Activated T-helper 1 cell treated with anti-CD3 and anti-CD28 coated beads, Interleukin-12 subunit alpha, Interleukin-12 subunit beta, Interleukin-2, Interleukin-4 antibody, amounts not matched to agents 30 ng/mL and 10 ng/mL and 1 ng/mL, durations not matched to agents 14 hours and 24 hours and 36 hours (primary cell): ENCODE measurements at regions of chr10 and their contacts with region 1.

Region 1: GRCh38 chr10:128064108-128064969 is 61.9 kb downstream of the MKI67 start:
- DNase-seq: peak; percentile 59
- H3K4me3 Mint-ChIP-seq: peak overlapping the region; percentile 78
- H3K27ac Mint-ChIP-seq: peak overlapping the region; percentile 93
- H3K4me1 Mint-ChIP-seq: peaks cover 63% of the 10 kb centered on the region
- H3K27me3 Mint-ChIP-seq: no peaks in the 10 kb centered on the region

Region 2: DNA sequence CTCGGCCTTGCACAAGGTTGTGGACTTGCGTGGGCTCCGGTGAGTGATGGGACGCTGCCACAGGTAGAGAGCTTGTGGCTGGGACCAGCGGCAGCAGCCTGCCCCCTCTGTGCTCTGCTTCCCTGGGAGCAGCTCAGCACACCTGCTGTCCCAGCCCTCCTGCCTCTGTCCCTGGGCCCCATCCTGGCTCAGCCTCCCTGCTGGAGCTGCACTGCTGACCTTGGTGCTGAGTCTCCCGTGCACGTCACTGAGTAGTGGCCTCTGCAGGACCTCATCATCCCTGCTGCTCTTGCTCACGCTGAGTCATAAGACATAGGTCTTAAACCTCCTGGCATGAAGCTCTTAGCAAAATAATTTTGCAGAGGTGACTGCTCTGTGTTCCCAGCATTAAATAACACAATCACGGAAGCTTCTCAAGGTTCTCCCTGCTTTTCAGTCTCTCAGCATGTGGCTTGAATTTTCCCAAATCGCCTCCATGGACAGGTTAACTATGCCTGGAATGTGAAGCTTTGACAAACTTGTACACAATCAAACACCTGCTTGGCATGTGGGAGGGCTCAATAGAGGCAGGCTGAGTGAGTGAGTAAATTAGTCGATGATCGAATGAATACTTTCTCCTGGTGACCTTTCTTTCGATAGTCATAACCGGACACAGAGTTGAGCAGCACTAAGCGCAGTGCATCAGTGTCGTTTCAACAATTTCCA is 579.0 kb before region 1 on chr10:
- intact Hi-C with region 1: no loop called
- DNase-seq: no peak
- H3K4me3 Mint-ChIP-seq: no peak overlapping the region
- H3K27ac Mint-ChIP-seq: no peak overlapping the region
- H3K4me1 Mint-ChIP-seq: no peaks in the 10 kb centered on the region
- H3K27me3 Mint-ChIP-seq: no peaks in the 10 kb centered on the region

Region 3: GRCh38 chr10:127906548-127907377 is 157.6 kb before region 1 on chr10 and contains the start of gene PTPRE:
- intact Hi-C with region 1: loop called (anchors 1 kb)
- DNase-seq: peak; percentile 66
- H3K4me3 Mint-ChIP-seq: peak within 1 kb of the TSS; percentile 66
- H3K27ac Mint-ChIP-seq: no peak within 1 kb of the TSS
- H3K4me1 Mint-ChIP-seq: no peaks in the 10 kb centered on the region
- H3K27me3 Mint-ChIP-seq: peaks cover 26% of the 10 kb centered on the region
- total RNA-seq, gene PTPRE: 40.8 and 41.8 TPM in 2 replicates

Region 4: DNA sequence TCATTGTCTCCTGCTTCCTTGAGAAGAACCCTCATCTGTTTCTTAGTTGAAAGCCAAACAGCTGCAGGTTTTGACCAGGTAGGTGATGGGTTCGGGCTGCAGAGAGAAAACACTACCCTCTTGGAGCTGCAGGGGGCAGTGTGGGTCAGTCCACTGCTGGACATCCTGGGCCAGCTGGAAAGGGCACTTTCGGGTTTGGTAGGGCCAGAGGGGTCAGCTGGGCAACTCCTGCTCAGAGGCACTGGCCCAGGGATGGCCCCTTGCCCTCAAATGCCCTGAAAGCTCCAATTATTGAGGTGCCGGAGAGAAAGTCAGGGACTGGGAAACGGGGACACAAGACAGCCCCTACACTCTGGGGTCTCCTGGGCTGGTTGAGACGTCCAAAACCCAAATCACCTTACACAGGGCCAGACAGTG is 28.8 kb before region 1 on chr10:
- intact Hi-C with region 1: loop called (anchors 1 kb)
- DNase-seq: peak; percentile 42
- H3K4me3 Mint-ChIP-seq: no peak overlapping the region
- H3K27ac Mint-ChIP-seq: no peak overlapping the region
- H3K4me1 Mint-ChIP-seq: no peaks in the 10 kb centered on the region
- H3K27me3 Mint-ChIP-seq: no peaks in the 10 kb centered on the region

Region 5: DNA sequence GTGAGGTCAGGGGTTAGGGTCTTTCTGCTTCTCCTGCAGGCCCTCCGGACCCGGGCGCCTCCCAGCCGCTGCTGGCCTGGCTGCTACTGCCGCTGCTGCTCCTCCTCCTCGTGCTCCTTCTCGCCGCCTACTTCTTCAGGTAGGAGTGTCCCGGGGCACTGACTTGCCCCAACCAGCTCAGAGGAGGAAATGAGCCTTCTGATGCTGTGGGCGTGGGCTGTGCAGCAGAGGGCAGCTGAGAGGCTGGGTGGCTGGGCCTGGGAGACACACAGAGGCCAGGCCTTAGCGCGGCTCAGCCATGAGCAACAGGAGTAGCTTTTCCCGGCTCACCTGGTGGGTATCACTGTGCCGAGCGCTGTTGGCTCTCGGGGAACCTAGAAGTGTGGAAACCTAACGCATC is 17.0 kb before region 1 on chr10:
- intact Hi-C with region 1: loop called (anchors 1 kb)
- DNase-seq: peak; percentile 83
- H3K4me3 Mint-ChIP-seq: peak overlapping the region; percentile 94
- H3K27ac Mint-ChIP-seq: peak overlapping the region; percentile 96
- H3K4me1 Mint-ChIP-seq: peaks cover 49% of the 10 kb centered on the region
- H3K27me3 Mint-ChIP-seq: peaks cover 2% of the 10 kb centered on the region

Region 6: GRCh38 chr10:128125944-128126764 is 61.8 kb after region 1 on chr10 and contains the start of gene MKI67:
- intact Hi-C with region 1: loop called (anchors 1 kb)
- DNase-seq: peak; percentile 88
- H3K4me3 Mint-ChIP-seq: peak within 1 kb of the TSS; percentile 98
- H3K27ac Mint-ChIP-seq: peak within 1 kb of the TSS; percentile 95
- H3K4me1 Mint-ChIP-seq: peaks cover 54% of the 10 kb centered on the region
- H3K27me3 Mint-ChIP-seq: peaks cover 2% of the 10 kb centered on the region
- total RNA-seq, gene MKI67: 141 and 159 TPM in 2 replicates

Region 7: DNA sequence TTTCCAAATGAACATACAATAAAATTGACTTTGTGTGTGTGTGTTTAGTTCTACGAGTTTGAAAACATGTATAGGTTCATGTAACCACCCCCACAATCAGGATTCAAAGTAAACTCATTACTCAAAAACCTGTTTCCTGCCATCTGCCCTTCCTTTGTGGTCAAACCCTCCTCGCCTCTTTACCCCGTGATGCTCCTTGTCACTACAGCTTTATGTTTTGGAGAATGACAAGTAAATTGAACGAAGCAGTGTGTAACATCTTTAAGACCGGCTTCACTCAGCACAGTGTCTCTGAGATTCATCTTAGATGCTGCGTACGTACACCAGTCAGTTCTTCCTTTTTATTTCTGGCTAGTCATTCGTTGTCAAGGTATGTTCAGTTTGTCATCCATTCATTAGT is 116.5 kb after region 1 on chr10:
- intact Hi-C with region 1: loop called (anchors 1 kb)
- DNase-seq: peak; percentile 68
- H3K4me3 Mint-ChIP-seq: peak overlapping the region; percentile 68
- H3K27ac Mint-ChIP-seq: peak overlapping the region; percentile 82
- H3K4me1 Mint-ChIP-seq: peaks cover 62% of the 10 kb centered on the region
- H3K27me3 Mint-ChIP-seq: no peaks in the 10 kb centered on the region

Region 8: DNA sequence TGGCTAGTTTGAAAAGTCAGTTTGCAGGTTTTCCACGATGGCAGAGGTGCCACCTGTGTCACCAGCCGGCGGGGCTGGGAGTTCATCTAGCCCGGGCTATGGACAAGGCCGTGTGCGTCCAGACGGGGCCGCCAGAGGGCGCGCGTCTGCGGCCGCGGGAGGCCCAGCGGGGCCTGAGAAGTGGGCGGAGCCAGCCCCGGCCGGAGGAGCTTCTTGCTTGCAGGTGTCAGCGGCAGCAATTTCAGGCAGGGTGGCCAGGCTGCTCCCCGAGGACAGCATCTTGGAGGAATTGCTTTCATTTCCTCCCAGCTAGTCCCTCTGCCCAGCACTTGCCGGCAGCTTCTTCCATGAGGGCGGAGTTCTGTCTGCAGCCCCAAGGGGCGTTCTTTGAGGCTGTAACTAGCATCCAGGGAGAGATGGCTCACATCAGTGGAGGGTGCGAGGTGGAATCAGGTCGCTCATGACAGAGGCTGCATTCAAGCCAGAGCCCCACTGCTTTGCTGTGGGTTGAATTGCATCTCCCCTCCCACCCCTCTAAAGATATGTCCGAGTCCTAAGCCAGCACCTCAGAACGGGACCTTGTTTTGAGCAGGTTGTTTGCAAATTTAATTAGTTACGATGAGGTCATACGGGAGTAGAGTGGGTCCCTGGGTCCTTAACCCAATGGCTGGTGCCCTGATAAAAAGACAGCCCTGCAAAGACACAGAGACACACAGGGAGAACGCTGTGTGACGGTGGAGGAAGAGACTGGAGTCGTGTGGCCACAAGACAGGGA is 147.8 kb after region 1 on chr10:
- intact Hi-C with region 1: loop called (anchors 1 kb)
- DNase-seq: peak; percentile 83
- H3K4me3 Mint-ChIP-seq: peak overlapping the region; percentile 86
- H3K27ac Mint-ChIP-seq: peak overlapping the region; percentile 89
- H3K4me1 Mint-ChIP-seq: peaks cover 11% of the 10 kb centered on the region
- H3K27me3 Mint-ChIP-seq: peaks cover 13% of the 10 kb centered on the region